H1 (cell line): ENCODE measurements at regions of chr11 and their contacts with region 1.

Region 1: DNA sequence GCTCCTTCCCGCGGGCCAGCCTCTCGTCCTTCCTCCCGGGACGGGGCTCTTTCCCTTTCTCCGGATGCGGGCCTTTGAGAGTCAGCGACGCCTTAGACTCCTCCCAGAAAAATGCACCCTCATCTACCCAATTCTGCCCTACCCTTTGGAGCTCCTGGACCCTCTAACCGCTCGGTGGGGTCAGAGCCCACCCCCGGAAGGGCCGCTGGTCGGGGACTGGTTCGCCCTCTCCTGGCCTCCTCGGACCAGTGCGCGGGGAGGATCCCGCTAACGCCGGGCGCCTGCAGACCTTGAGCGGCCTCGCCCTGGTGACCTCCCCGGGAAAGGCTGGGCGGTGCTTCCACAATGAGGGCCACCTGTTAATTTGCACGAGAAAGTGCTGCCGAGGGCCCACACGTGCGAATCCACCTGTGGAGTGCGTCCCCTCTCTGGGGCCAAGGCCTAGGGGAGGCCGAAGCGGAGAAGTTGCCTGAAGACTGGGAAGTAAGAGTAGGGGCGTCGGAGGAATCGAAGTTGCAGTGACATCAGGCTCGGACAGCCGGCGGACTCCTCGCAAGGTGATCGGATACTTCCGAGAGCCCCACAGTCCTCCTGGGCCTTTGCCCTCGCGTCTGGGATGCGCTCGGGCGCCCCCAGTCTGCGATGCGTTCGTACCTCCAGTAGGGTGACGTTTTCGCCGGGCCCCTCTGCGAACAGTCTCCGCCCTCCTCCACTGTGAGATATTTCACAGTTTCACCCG is 61.5 kb downstream of the ENDOD1 start:
- DNase-seq: peak; percentile 91 to 93
- H3K4me3 ChIP-seq: peak overlapping the region; percentile 38 to 73 (median 60)
- H3K27ac ChIP-seq: no peak overlapping the region
- H3K4me1 ChIP-seq: peaks cover 3 to 5% (median 4%) of the 10 kb centered on the region in 4 experiments; a peak in 6 of 7 replicates
- H3K27me3 ChIP-seq: peaks cover 15 to 45% (median 36%) of the 10 kb centered on the region in 4 experiments
- CTCF ChIP-seq: peak; percentile 71 to 96 (median 91)
- EP300 ChIP-seq: no peak
- POLR2A ChIP-seq: no peak; a peak in 1 of 3 replicates
- RAD21 ChIP-seq: peak; percentile 20 to 86

Region 2: DNA sequence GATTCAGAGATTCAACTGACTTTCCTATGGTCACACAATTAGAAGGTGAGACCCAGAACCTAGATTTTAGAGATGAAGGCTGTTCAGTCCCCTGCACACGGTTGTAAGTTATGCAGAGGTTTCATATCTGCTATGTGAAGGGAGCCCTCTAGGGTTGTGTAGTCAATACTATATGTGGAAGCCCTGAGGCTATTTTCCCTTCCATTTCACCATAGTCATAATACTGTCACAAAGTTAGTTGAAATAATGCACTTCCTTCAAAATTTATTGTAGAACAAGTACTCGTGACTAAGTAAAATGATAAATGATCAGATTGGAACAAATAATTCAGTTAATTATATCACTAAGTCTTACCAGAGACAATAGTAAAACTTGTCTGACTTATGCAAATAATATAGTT is 12.7 kb before region 1 on chr11:
- CTCF ChIA-PET with region 1: interaction called, 14 read pairs
- POLR2A ChIA-PET with region 1: no interaction called
- DNase-seq: no peak
- H3K4me3 ChIP-seq: no peak overlapping the region
- H3K27ac ChIP-seq: no peak overlapping the region
- H3K4me1 ChIP-seq: no peaks in the 10 kb centered on the region
- H3K27me3 ChIP-seq: peaks cover 0 to 5% (median 1%) of the 10 kb centered on the region in 4 experiments; a peak in 2 of 7 replicates
- CTCF ChIP-seq: peak in 1 of 3 experiments; percentile 6; a peak in 1 of 4 replicates
- EP300 ChIP-seq: no peak
- POLR2A ChIP-seq: no peak
- RAD21 ChIP-seq: peak; percentile 16 to 45; a peak in 3 of 4 replicates

Region 3: GRCh38 chr11:95358511-95359340 is 207.6 kb after region 1 on chr11:
- CTCF ChIA-PET with region 1: interaction called, 16 read pairs
- POLR2A ChIA-PET with region 1: no interaction called
- DNase-seq: no peak
- H3K4me3 ChIP-seq: no peak overlapping the region
- H3K27ac ChIP-seq: no peak overlapping the region
- H3K4me1 ChIP-seq: peaks cover 9 to 14% (median 12%) of the 10 kb centered on the region in 4 experiments; a peak in 6 of 7 replicates
- H3K27me3 ChIP-seq: no peaks in the 10 kb centered on the region
- CTCF ChIP-seq: no peak
- EP300 ChIP-seq: no peak
- POLR2A ChIP-seq: no peak
- RAD21 ChIP-seq: no peak

Region 4: DNA sequence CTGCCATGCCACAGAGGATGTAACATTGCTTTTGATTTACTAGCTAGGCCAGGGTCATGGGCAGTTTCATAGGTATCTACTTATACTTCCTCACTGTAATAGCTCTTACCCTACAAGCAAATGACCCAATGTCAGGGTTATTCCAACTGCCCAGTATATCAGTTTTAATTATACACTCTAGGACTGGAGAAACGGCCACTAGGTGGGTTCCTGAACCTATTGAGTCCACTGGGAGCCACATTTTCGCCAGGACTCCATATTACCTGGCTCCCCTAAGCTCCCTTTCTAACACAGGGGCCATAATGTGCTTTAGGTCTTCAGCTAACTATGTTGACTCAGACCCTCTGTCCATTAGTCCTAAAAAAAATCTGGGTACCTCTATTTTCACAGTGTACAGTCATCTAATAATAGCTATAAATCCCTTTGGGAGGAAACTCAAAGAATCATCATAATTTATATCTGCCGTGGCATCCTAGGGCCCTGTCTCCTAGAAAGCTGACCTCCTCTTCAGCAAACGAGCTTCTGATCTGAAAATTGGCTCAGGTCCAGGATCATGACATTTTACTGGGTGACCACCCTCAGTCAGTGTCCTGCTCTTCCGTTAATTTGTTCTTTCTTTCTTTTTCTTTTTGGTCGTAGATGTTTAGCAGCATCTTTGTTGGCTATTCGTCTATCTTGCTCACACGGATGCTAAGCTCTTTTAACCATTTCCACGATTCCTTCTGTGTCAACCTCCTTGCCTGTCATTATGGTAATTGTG is 394.2 kb after region 1 on chr11:
- CTCF ChIA-PET with region 1: interaction called, 83 read pairs
- POLR2A ChIA-PET with region 1: no interaction called
- DNase-seq: no peak
- H3K4me3 ChIP-seq: no peak overlapping the region
- H3K27ac ChIP-seq: no peak overlapping the region
- H3K4me1 ChIP-seq: no peaks in the 10 kb centered on the region
- H3K27me3 ChIP-seq: no peaks in the 10 kb centered on the region
- CTCF ChIP-seq: peak in 2 of 3 experiments; percentile 20 to 34; a peak in 2 of 4 replicates
- EP300 ChIP-seq: no peak
- POLR2A ChIP-seq: no peak
- RAD21 ChIP-seq: peak; percentile 21 to 47; a peak in 3 of 4 replicates

Region 5: GRCh38 chr11:95705485-95706124 is 554.5 kb after region 1 on chr11:
- CTCF ChIA-PET with region 1: interaction called, 407 read pairs
- POLR2A ChIA-PET with region 1: no interaction called
- DNase-seq: peak; percentile 62 to 88
- H3K4me3 ChIP-seq: no peak overlapping the region
- H3K27ac ChIP-seq: no peak overlapping the region
- H3K4me1 ChIP-seq: 0 out of 7 replicates have a peak, but pooled peaks cover 0 to 2% (median 0%) of the 10 kb centered on the region in 4 experiments
- H3K27me3 ChIP-seq: peaks cover 0 to 1% (median 0%) of the 10 kb centered on the region in 4 experiments; a peak in 1 of 7 replicates
- CTCF ChIP-seq: peak; percentile 78 to 92 (median 90)
- EP300 ChIP-seq: no peak
- POLR2A ChIP-seq: no peak
- RAD21 ChIP-seq: peak; percentile 99

Region 6: DNA sequence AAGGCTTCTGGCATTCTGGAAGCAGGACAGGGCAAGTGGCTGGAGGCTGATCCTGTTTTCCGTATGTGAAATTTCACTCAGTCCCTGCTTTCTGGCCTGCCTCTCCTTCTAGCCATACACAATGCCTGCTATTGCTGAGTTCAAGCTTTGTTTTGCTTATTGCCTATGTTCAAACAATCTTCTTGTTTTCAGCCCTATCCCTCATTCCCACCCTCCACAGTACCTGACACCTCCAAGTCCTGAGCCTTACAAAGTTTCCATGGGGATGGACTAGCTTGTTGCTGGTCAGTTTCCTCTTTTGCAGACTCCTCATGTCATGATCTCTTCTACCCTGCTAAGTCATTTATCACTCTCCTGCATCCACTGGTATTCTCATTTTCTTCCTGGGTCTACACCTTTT is 600.4 kb after region 1 on chr11:
- CTCF ChIA-PET with region 1: interaction called, 56 read pairs
- POLR2A ChIA-PET with region 1: no interaction called
- DNase-seq: no peak
- H3K4me3 ChIP-seq: no peak overlapping the region
- H3K27ac ChIP-seq: no peak overlapping the region
- H3K4me1 ChIP-seq: no peaks in the 10 kb centered on the region
- H3K27me3 ChIP-seq: no peaks in the 10 kb centered on the region
- CTCF ChIP-seq: no peak
- EP300 ChIP-seq: no peak
- POLR2A ChIP-seq: no peak
- RAD21 ChIP-seq: no peak